ENCODE measurements at regions of chr17 and their contacts with region 1.

Region 1: GRCh38 chr17:75589012-75589918 is 1.7 kb downstream of the MYO15B start:
- DNase-seq: peak; percentile 97 to 99 (median 99)
- ATAC-seq: peak; percentile 80 to 87
- H3K4me3 ChIP-seq: peak overlapping the region; percentile 62
- H3K27ac ChIP-seq: peak overlapping the region; percentile 73
- H3K4me1 ChIP-seq: no peaks in the 10 kb centered on the region
- H3K27me3 ChIP-seq: no peaks in the 10 kb centered on the region

Region 2: GRCh38 chr17:75430159-75430974 is 158.9 kb before region 1 on chr17:
- intact Hi-C with region 1: loop called in 3 of 4 experiments (anchors 2 to 10 kb)
- DNase-seq: peak in 1 of 3 donors; percentile 49
- ATAC-seq: peak in 1 of 2 donors; percentile 28
- H3K4me3 ChIP-seq: no peak overlapping the region
- H3K27ac ChIP-seq: peak overlapping the region; percentile 71
- H3K4me1 ChIP-seq: peaks cover 2% of the 10 kb centered on the region
- H3K27me3 ChIP-seq: no peaks in the 10 kb centered on the region

Region 3: DNA sequence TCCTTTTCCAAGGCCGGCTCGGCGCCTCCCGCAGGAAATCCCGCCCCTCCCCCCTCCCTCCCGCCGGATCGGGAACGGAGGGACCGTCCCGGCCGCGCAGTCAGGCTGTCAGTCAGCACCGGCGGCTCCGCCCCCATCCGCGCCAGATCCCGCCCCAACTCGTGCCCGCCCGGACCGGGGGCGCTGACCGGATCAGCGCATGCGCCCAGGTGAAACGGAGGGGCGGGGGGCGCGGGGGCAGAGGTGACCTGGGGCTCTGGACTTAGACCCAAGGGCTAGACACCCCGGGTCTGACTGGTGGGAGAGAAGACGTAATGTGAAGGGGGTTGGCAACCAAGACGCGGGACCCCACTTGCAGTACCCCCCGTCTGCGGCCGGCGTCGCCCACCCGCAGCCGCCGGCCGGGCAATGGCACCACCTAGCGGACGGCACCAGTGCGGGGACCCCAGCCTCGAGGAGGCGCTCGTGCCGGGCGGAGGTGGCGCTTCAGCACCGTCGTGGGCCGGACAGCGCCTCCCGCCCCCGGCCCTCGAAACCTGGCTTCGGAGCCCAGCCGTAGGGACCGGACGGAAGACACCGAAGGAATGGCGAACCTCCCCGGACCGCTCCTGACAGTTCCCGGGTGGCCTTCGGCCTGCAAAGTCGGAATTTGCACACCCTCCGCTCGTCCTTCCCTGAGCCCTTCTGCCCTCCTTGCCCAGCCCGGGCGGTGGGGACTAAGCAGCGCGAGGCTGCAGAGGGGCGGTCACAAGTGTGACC is 73.6 kb before region 1 on chr17 and contains the start of gene CASKIN2:
- intact Hi-C with region 1: loop called in 3 of 4 experiments (anchors 5 to 10 kb)
- DNase-seq: peak; percentile 97 to 99 (median 99)
- ATAC-seq: peak; percentile 91 to 94
- H3K4me3 ChIP-seq: peak within 1 kb of the TSS; percentile 73
- H3K27ac ChIP-seq: peak within 1 kb of the TSS; percentile 76
- H3K4me1 ChIP-seq: peaks cover 11% of the 10 kb centered on the region
- H3K27me3 ChIP-seq: no peaks in the 10 kb centered on the region
- total RNA-seq, gene CASKIN2: 38.0 to 50.4 (median 46.4) TPM

Region 4: DNA sequence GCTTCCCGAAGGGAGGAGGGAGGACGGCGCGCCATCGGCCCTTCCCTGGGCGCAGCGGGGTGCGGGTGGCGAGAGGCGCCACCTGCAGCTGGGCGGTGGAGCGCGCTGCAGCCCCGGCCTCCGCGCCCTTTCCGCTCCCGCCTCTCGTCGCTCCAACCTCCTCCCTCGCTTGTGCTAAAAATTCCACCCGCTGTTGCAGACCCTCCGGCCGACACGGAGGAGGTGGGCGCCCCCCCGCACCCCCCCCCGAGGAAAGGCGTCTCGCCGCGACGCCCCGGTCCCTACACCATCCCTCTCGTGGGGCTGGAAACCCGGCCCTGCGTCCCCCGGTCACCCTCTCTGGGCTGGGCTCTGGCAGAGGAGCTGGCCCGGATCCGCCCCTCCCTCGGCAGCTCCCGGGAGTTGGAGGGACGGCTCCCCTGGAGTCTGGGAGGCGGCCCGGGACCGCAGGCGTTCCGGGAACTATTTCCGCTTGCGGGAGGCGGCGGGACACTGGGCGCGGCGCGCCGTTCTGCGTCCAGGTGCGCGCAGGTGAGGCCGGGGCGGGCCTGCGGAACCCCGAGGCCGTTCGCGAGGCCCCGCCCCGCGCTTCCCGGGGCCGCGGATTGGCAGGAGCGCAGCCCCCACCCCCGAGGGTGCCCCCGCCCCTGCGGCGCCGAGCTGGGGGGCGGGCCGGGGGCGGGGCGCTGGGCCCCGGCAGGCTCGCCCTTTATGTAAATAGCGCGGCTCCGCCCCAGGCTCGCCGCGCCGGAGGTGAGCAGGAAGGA is 64.1 kb before region 1 on chr17 and contains the start of gene LLGL2:
- intact Hi-C with region 1: loop called in 1 of 4 experiments (anchors 10 kb)
- DNase-seq: peak; percentile 69 to 92 (median 91)
- ATAC-seq: peak; percentile 87 to 91
- H3K4me3 ChIP-seq: peak within 1 kb of the TSS; percentile 68
- H3K27ac ChIP-seq: peak within 1 kb of the TSS; percentile 22
- H3K4me1 ChIP-seq: no peaks in the 10 kb centered on the region
- H3K27me3 ChIP-seq: no peaks in the 10 kb centered on the region
- total RNA-seq, gene LLGL2: 5.7 to 10.4 (median 7.6) TPM